B cell (primary cell): ENCODE measurements at regions of chr16 and their contacts with region 1.

Region 1: GRCh38 chr16:31073968-31074813 is at the starts of genes ZNF646 and ZNF668:
- DNase-seq: peak; percentile 99
- ATAC-seq: peak; percentile 86
- H3K4me3 ChIP-seq: peak within 1 kb of the TSS; percentile 73 to 99 (median 91)
- H3K4me3 Mint-ChIP-seq: peak within 1 kb of the TSS; percentile 95
- H3K27ac ChIP-seq: peak within 1 kb of the TSS; percentile 78 to 89
- H3K27ac Mint-ChIP-seq: peak within 1 kb of the TSS; percentile 96
- H3K4me1 ChIP-seq: peaks cover 20 to 25% of the 10 kb centered on the region in 2 donors
- H3K4me1 Mint-ChIP-seq: peaks cover 36% of the 10 kb centered on the region
- H3K27me3 ChIP-seq: no peaks in the 10 kb centered on the region
- H3K27me3 Mint-ChIP-seq: no peaks in the 10 kb centered on the region
- CTCF ChIP-seq: no peak
- total RNA-seq, gene ZNF646: 45.9 and 51.7 TPM in 2 replicates
- total RNA-seq, gene ZNF668: 11.1 and 12.0 TPM in 2 replicates

Region 2: DNA sequence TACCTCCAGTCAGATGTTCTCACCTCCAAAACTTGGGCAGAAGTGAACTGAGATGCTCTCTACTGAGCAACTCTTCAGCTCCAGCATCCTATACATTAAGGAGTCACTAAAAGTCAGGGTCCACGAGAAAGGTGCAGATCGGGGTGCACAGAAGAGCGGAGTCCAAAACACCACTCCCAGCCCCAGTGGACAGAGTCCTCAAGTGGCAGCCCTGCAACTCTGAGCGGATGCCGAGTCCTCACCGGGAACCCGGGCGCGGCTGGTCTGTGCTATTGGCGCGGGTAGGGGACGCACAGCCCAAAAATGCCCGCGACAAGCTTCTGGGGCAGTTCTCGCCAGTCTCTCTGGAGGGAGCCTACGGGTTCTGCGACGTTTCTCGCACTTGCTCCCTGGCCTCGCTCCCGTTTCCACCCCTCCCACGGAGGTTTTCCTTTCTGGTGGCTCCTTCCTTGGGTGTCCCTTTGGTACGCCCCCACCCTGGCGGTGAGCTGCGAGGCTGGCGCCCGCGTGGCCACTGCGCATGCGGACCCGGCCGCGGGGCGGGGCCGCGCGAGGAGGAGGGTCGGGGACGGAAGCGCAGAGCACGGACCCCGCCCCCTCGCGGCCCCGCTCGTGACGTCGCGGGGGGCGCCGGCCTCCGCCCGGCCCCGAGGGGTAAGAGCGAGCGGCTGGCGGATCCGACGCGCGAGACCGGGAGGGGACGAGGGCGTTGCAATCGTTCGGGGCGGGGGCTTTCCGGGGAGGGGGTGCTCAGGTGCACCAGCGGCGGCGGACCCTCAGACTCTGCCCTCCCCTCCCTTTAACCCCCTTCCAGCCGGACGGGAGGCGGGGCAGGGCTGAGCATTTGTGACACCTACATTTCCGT is 1112.5 kb before region 1 on chr16 and contains the start of gene TMEM219:
- CTCF ChIA-PET with region 1: no interaction called
- POLR2A ChIA-PET with region 1: no interaction called
- intact Hi-C with region 1: loop called (anchors 5 kb)
- DNase-seq: peak; percentile 97
- ATAC-seq: peak; percentile 92
- H3K4me3 ChIP-seq: peak within 1 kb of the TSS; percentile 76 to 86 (median 84)
- H3K4me3 Mint-ChIP-seq: peak within 1 kb of the TSS; percentile 90
- H3K27ac ChIP-seq: peak within 1 kb of the TSS; percentile 79 to 88
- H3K27ac Mint-ChIP-seq: peak within 1 kb of the TSS; percentile 91
- H3K4me1 ChIP-seq: peaks cover 13 to 19% of the 10 kb centered on the region in 2 donors
- H3K4me1 Mint-ChIP-seq: peaks cover 20% of the 10 kb centered on the region
- H3K27me3 ChIP-seq: no peaks in the 10 kb centered on the region
- H3K27me3 Mint-ChIP-seq: no peaks in the 10 kb centered on the region
- CTCF ChIP-seq: peak; percentile 65
- total RNA-seq, gene TMEM219: 56.3 and 66.6 TPM in 2 replicates

Region 3: DNA sequence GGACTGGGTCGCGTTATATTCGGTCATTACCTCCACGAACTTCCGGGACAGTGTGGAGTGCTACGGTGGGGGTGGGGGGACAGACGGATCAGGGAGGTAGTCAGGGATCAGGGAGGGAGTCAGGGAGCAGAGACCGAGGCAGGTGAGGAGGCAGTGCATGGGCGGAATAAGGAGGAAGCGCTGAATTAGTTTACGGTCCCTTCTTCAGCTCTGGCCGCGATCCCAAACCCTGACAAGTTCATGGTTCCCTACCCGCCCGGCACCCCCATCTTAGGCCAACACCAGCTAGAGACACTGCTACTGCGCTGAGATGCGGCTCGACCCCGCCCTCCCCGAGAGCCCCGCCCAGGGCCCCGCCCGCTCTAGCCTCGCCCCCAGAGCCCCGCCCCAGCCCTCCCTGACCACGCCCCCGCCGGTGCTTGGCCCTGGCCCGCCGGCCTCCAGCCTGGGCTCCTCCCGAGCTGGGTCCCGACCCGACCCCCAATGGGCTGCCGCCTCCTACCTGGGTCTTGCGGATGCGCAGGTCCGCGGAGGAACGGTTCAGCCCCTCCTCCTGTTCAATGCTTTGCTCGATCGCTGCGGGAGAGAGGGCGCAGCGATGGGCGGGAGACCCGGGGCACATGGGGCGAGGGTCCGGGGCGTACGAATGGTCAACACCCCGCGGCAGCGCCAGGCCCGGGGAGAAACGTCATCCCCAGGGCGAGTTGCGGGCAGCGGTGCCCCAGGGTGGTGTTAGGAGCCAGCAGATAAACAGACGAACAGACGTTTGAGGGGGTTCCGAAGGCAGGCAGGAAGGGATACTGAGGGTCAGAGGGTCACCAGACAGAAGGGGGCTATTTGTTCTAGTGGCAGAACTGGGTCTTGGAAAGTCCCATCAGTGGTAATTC is 76.9 kb before region 1 on chr16:
- CTCF ChIA-PET with region 1: interaction called, 5 read pairs
- POLR2A ChIA-PET with region 1: no interaction called
- intact Hi-C with region 1: loop called (anchors 1 kb)
- DNase-seq: peak; percentile 88
- ATAC-seq: peak; percentile 100
- H3K4me3 ChIP-seq: peak overlapping the region in 4 of 5 experiments; percentile 54 to 72 (median 66)
- H3K4me3 Mint-ChIP-seq: peak overlapping the region; percentile 91
- H3K27ac ChIP-seq: peak overlapping the region; percentile 29 to 62
- H3K27ac Mint-ChIP-seq: peak overlapping the region; percentile 92
- H3K4me1 ChIP-seq: peaks cover 9 to 13% of the 10 kb centered on the region in 2 donors
- H3K4me1 Mint-ChIP-seq: peaks cover 9% of the 10 kb centered on the region
- H3K27me3 ChIP-seq: peaks cover 0 to 7% (median 0%) of the 10 kb centered on the region in 4 experiments
- H3K27me3 Mint-ChIP-seq: no peaks in the 10 kb centered on the region
- CTCF ChIP-seq: no peak

Region 4: GRCh38 chr16:31063843-31064611 is 10.2 kb before region 1 on chr16:
- CTCF ChIA-PET with region 1: no interaction called
- POLR2A ChIA-PET with region 1: no interaction called
- intact Hi-C with region 1: no loop called
- DNase-seq: no peak
- ATAC-seq: no peak
- H3K4me3 ChIP-seq: no peak overlapping the region
- H3K4me3 Mint-ChIP-seq: no peak overlapping the region
- H3K27ac ChIP-seq: no peak overlapping the region
- H3K27ac Mint-ChIP-seq: no peak overlapping the region
- H3K4me1 ChIP-seq: no peaks in the 10 kb centered on the region
- H3K4me1 Mint-ChIP-seq: peaks cover 12% of the 10 kb centered on the region
- H3K27me3 ChIP-seq: no peaks in the 10 kb centered on the region
- H3K27me3 Mint-ChIP-seq: no peaks in the 10 kb centered on the region
- CTCF ChIP-seq: no peak

Region 5: DNA sequence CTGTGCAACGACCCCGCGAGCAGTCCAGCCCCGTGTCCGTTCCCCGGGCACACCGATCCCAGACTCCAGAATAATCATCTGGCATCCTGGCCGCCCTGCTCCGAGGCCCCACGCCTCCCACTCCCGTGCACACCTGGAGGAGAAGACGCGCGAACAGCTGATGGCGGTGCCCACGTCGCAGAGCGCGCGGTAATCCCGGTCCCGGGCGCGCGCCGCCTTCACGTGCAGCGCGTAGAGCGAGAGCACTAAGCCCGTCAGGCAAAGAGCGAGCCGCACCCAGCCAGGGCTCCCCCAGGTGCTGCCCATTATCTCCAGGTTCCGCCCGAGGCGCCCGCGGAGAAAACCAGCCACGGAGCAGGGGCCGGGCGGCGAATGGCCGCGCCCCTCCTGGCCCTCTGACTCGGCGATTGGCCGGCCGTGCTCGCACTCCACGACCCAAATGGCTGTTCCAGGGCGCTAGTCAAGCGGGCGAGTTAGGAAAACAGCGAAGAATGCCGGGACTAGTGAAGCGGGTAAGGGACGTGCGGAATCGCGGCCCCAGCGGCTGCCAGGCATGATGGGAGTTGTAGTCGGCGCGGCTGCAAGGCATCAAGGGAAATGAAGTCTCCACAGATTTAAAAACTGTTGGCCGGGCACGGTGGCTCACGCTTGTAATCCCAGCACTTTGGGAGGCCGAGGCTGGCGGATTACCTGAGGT is 20.4 kb after region 1 on chr16 and contains the start of gene VKORC1:
- CTCF ChIA-PET with region 1: interaction called, 4 read pairs
- POLR2A ChIA-PET with region 1: interaction called, 6 read pairs
- intact Hi-C with region 1: loop called (anchors 1 kb)
- DNase-seq: peak; percentile 90
- ATAC-seq: peak; percentile 89
- H3K4me3 ChIP-seq: peak within 1 kb of the TSS; percentile 50 to 99 (median 73)
- H3K4me3 Mint-ChIP-seq: peak within 1 kb of the TSS; percentile 98
- H3K27ac ChIP-seq: peak within 1 kb of the TSS; percentile 81 to 85
- H3K27ac Mint-ChIP-seq: peak within 1 kb of the TSS; percentile 96
- H3K4me1 ChIP-seq: peaks cover 14 to 31% of the 10 kb centered on the region in 2 donors
- H3K4me1 Mint-ChIP-seq: peaks cover 29% of the 10 kb centered on the region
- H3K27me3 ChIP-seq: no peaks in the 10 kb centered on the region
- H3K27me3 Mint-ChIP-seq: no peaks in the 10 kb centered on the region
- CTCF ChIP-seq: no peak
- total RNA-seq, gene VKORC1: 36.8 and 45.7 TPM in 2 replicates

Region 6: DNA sequence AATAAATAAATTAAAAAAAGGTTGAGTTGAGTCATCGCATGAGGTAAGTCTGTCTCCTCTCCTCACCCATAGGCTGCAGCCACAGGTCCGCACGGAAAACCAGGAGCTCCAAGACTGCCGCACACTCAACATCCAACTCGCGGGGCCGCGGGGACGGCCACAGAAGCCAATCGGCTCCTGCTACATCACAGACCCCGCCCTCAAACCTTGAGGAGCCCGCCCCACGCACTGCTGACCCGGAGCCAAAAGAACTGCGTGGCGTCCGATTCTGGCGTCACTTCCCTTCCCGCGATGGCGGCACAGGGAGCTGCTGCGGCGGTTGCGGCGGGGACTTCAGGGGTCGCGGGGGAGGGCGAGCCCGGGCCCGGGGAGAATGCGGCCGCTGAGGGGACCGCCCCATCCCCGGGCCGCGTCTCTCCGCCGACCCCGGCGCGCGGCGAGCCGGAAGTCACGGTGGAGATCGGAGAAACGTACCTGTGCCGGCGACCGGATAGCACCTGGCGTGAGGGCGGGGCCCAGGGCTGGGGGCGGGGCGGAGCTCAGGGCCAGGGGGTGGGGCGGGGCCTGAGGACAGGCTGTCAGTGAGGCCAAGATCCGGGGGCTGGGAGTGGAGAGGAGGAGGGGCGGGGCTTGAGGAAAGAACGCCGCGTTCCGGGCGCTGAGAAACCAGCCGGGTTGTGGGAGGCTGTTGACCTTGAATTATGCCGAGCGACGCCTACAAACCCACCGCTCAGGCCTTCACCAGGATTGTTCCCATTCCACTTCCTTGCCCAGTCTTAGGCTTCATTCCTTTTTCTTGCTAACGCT is 43.4 kb after region 1 on chr16 and contains the start of gene KAT8:
- CTCF ChIA-PET with region 1: interaction called, 8 read pairs
- POLR2A ChIA-PET with region 1: interaction called, 28 read pairs
- intact Hi-C with region 1: loop called (anchors 1 kb)
- DNase-seq: peak; percentile 98
- ATAC-seq: peak; percentile 94
- H3K4me3 ChIP-seq: peak within 1 kb of the TSS; percentile 49 to 83 (median 66)
- H3K4me3 Mint-ChIP-seq: peak within 1 kb of the TSS; percentile 92
- H3K27ac ChIP-seq: peak within 1 kb of the TSS; percentile 72 to 95
- H3K27ac Mint-ChIP-seq: peak within 1 kb of the TSS; percentile 96
- H3K4me1 ChIP-seq: peaks cover 10 to 20% of the 10 kb centered on the region in 2 donors
- H3K4me1 Mint-ChIP-seq: peaks cover 15% of the 10 kb centered on the region
- H3K27me3 ChIP-seq: no peaks in the 10 kb centered on the region
- H3K27me3 Mint-ChIP-seq: no peaks in the 10 kb centered on the region
- CTCF ChIP-seq: no peak
- total RNA-seq, gene KAT8: 100.0 and 102 TPM in 2 replicates